Left lung (tissue), 14 donors: ENCODE measurements at regions of chr6 and their contacts with region 1.

Region 1: GRCh38 chr6:1609648-1610496 is at the start of gene FOXC1:
- DNase-seq: peak in 3 of 4 donors; percentile 80 to 94 (median 83)
- ATAC-seq: peak; percentile 92
- H3K4me3 ChIP-seq: peak within 1 kb of the TSS; percentile 44 to 59
- H3K27ac ChIP-seq: peak within 1 kb of the TSS; percentile 55 to 59
- H3K4me1 ChIP-seq: peaks cover 12 to 70% of the 10 kb centered on the region in 2 donors
- H3K27me3 ChIP-seq: peaks cover 84 to 100% of the 10 kb centered on the region in 2 donors
- CTCF ChIP-seq: no peak
- polyA plus RNA-seq, gene FOXC1: 0.75 to 1.3 (median 0.91) TPM

Region 2: DNA sequence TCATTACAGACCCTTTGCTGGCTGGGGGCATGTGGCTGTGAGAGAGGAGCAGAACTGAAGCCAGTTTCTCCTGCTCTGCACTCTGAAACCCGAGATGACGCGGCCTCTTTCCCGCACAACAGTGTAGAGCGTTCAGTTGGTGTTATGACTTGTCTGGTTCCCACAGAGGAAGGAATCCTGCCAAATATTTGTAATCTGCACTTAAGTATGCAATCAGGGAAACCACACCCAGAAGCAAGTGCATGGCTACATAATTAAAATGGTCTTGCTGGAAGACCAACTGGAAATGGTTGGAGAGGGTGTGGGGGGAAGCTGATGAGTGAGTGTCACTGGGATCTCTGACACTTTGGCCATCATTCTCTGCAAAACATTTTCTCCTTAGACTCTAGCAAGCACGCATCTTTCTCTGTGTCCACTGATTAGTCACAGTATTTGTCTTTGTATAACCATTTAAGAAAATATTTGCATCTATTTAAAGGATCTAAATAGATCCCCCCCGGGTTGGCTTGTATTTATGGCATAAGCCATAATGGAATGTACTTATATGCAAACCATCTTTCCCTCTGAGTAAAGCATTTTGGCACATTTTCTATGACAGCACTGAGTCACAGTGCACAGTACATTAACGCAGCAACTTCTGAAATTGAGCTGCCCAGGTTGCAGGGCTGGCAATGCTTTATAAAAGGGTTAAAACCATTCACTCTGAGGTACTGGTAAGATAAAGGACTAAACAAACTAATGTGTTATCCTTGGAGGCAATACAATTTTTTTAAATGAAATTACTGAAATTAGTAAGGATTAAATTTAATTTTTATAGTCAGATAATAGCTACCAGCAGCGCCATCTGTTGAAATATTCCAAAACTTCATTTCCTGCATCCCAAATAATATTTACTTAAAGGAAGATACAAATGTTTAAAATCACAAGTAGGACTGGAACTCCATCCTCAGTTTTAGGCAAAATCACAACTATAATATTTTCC is 76.5 kb after region 1 on chr6:
- intact Hi-C with region 1: loop called in 1 of 2 experiments (anchors 10 kb)
- DNase-seq: peak in 2 of 4 donors; percentile 49 to 62
- ATAC-seq: peak; percentile 89
- H3K4me3 ChIP-seq: no peak overlapping the region
- H3K27ac ChIP-seq: peak overlapping the region in 1 of 2 donors; percentile 33
- H3K4me1 ChIP-seq: peaks cover 12 to 14% of the 10 kb centered on the region in 2 donors
- H3K27me3 ChIP-seq: no peaks in the 10 kb centered on the region
- CTCF ChIP-seq: no peak

Region 3: GRCh38 chr6:2103644-2104523 is 494.0 kb after region 1 on chr6:
- intact Hi-C with region 1: loop called in 1 of 2 experiments (anchors 5 kb)
- DNase-seq: peak in 2 of 4 donors; percentile 32 to 41
- ATAC-seq: peak; percentile 86
- H3K4me3 ChIP-seq: no peak overlapping the region
- H3K27ac ChIP-seq: no peak overlapping the region
- H3K4me1 ChIP-seq: no peaks in the 10 kb centered on the region
- H3K27me3 ChIP-seq: no peaks in the 10 kb centered on the region
- CTCF ChIP-seq: peak in 1 of 2 donors; percentile 42

Region 4: DNA sequence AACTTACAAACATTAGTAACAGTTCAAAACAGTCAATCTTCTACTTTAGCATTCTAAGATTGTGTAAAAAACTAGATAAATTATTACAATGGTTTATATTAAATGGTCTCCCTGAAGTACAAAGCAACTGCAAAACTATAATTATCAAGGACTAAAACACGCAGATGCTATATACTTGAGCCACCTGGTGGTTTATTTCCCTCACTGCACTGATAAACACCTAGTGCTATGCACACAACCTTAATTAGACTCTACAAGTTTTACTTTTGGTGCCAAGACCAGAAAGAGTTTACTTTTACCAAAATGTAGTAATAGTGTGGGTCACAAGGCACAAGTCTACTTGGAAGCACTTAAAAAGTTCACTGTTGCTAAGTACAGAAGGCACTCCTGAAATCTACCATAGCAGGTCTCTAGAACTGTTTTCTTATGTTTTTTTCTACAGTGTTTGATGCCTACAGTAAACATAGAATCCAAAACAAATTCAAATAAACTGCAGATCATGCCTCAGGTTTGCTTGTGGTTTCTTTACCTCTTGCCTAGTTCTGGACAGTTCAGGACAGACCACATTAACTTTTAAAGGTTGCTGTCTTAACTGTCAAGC is 586.3 kb after region 1 on chr6:
- intact Hi-C with region 1: loop called in 1 of 2 experiments (anchors 10 kb)
- DNase-seq: peak in 2 of 4 donors; percentile 38 to 55
- ATAC-seq: peak; percentile 94
- H3K4me3 ChIP-seq: no peak overlapping the region
- H3K27ac ChIP-seq: no peak overlapping the region
- H3K4me1 ChIP-seq: peaks cover 0 to 9% of the 10 kb centered on the region in 2 donors
- H3K27me3 ChIP-seq: no peaks in the 10 kb centered on the region
- CTCF ChIP-seq: peak; percentile 63 to 81

Region 5: GRCh38 chr6:2353412-2354137 is 743.7 kb after region 1 on chr6:
- intact Hi-C with region 1: loop called in 1 of 2 experiments (anchors 10 kb)
- DNase-seq: peak in 2 of 4 donors; percentile 71 to 81
- ATAC-seq: peak; percentile 91
- H3K4me3 ChIP-seq: no peak overlapping the region
- H3K27ac ChIP-seq: no peak overlapping the region
- H3K4me1 ChIP-seq: peaks cover 0 to 6% of the 10 kb centered on the region in 2 donors
- H3K27me3 ChIP-seq: no peaks in the 10 kb centered on the region
- CTCF ChIP-seq: peak; percentile 54 to 70

Region 6: DNA sequence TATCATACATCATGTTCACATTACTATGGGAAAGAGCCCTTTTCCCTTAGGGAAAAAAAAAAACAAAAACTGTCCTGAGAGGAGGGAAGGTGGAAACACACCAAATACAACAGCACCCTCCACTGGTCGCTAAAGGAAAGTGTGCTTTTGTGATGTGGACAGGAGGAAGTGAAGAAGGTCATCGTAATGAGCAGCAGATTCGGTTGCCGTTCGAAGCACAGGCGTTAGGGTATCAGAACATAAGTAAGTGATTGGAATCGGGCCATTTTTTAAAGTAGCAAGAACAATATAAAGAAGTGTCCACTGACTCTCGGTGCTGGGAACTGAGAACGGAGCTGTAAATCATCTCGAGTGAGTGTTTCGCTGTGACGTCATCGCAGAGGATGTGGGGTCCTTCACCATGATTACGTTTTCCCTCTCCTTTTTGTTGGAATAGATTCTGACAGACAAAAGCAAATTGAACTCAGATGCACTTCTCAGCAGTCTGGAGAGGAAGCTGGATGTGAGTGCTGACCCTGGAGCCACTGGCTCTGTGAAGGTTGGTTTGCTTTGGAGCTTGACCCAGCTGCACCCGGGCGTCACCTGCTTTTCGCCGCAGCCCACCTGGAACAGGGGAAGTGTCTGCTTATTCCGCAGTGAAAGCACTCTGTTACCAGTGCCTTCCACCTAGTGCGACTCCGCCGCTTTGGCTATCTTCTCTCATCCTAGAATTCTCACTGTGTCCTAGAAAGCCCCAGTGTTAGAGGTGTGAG is 839.1 kb after region 1 on chr6:
- intact Hi-C with region 1: loop called in 1 of 2 experiments (anchors 10 kb)
- DNase-seq: peak in 2 of 4 donors; percentile 43 to 77
- ATAC-seq: peak; percentile 94
- H3K4me3 ChIP-seq: peak overlapping the region in 1 of 2 donors; percentile 8
- H3K27ac ChIP-seq: no peak overlapping the region
- H3K4me1 ChIP-seq: peaks cover 0 to 6% of the 10 kb centered on the region in 2 donors
- H3K27me3 ChIP-seq: no peaks in the 10 kb centered on the region
- CTCF ChIP-seq: peak; percentile 48 to 71